ENCODE measurements at regions of chr9 and their contacts with region 1.

Region 1: GRCh38 chr9:98045234-98046179 is 11.0 kb upstream of the NANS start:
- DNase-seq: peak in 9 of 10 donors; percentile 9 to 80 (median 55)
- ATAC-seq: peak; percentile 97 to 98
- H3K4me3 Mint-ChIP-seq: peak overlapping the region; percentile 77 to 88 (median 82)
- H3K27ac Mint-ChIP-seq: peak overlapping the region; percentile 86 to 100 (median 93)
- H3K4me1 Mint-ChIP-seq: peaks cover 18 to 51% (median 31%) of the 10 kb centered on the region in 4 donors
- H3K27me3 Mint-ChIP-seq: peaks cover 0 to 5% (median 0%) of the 10 kb centered on the region in 5 donors

Region 2: DNA sequence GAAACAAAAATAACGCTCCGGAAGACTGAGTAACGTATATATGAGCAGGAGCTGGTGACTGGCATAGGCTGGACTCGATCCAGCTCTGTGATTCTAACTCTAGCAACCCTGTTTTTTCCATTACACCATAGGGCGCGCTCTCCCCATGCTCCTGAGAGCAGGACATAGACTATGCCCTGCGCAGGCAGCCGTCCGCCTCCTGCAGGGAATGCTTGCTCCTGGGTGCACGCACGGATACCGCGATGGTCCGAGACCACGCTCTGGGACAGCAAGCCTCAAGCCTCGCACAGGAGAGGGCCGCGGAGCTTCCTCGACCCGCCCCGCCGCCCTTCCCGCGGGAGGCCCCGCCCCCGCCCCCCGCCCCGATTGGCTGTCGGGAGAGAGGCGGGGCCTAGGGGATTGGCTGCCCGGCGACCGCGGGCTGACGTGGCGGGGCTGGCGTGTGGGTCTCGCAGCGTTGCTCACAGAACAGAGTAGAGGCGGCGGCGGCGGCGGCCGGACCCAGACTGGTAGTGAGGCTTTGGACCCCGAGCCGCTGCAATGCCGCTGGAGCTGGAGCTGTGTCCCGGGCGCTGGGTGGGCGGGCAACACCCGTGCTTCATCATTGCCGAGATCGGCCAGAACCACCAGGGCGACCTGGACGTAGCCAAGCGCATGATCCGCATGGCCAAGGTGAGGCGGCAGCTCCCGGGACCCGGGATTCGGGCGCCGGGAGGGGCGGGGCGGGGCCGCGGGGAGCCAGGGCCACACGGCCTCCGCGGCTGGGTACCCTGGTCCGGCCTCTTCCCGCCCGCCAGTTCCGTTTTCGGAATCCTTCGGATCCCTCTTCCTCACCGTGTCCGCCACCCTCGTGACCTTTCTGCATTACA is 11.0 kb after region 1 on chr9 and contains the start of gene NANS:
- POLR2A ChIA-PET with region 1: interaction called, 16 read pairs
- DNase-seq: peak; percentile 86 to 95 (median 88)
- ATAC-seq: peak; percentile 92 to 93
- H3K4me3 Mint-ChIP-seq: peak within 1 kb of the TSS; percentile 90 to 99 (median 96)
- H3K27ac Mint-ChIP-seq: peak within 1 kb of the TSS; percentile 88 to 98 (median 96)
- H3K4me1 Mint-ChIP-seq: peaks cover 8 to 35% (median 25%) of the 10 kb centered on the region in 4 donors
- H3K27me3 Mint-ChIP-seq: no peaks in the 10 kb centered on the region
- polyA plus RNA-seq, gene NANS: 28.9 to 32.4 (median 30.9) TPM

Region 3: GRCh38 chr9:98107926-98108325 is 62.4 kb after region 1 on chr9:
- POLR2A ChIA-PET with region 1: no interaction called
- DNase-seq: peak in 1 of 10 donors; percentile 22
- ATAC-seq: peak; percentile 6 to 38
- H3K4me3 Mint-ChIP-seq: peak overlapping the region in 9 of 10 donors; percentile 58 to 84 (median 78)
- H3K27ac Mint-ChIP-seq: peak overlapping the region; percentile 93 to 99 (median 98)
- H3K4me1 Mint-ChIP-seq: peaks cover 34 to 90% (median 80%) of the 10 kb centered on the region in 4 donors
- H3K27me3 Mint-ChIP-seq: no peaks in the 10 kb centered on the region